Psoas muscle (tissue), 8 donors: ENCODE measurements at regions of chr10 and their contacts with region 1.

Region 1: DNA sequence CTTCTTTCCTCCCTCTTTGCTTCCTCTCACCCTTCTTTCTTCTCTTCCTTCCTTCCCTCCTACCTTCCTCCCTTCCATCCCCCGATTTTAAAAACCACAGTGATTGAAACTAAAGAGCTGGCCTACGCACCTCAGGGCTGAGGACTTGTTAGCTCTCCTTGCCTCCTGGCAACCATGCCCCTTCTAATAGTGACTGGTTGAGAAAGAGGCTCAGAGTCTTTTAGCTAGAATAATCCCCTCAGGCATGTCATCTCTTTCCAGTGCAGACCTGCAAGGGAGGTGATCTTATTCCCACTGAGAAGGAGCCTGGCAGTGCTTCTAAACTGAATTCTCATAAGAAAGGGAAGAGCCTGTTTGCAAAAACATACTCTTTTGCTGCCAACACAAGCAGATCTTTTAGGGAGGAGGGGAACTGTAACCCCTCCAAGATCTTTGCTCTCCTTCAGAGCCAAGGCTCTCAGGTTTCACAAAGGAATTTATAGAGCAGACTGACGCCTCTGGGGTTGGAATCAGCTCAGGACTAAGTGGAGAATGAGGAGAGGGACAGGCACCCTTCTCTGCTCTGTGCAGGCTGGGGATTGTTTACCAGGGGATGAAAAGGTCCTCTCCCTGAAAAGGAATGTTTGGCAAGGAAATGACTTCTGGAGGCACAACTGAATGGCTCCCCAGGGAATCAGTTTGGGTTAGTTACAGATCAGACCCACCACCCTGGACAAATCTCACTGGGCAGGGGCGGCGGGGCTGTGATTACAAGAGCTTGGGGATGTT is 9.4 kb upstream of the ANKRD1 start:
- DNase-seq: no peak
- ATAC-seq: peak; percentile 81 to 93 (median 86)
- H3K4me3 ChIP-seq: peak overlapping the region; percentile 3
- H3K27ac ChIP-seq: peak overlapping the region; percentile 81
- H3K4me1 ChIP-seq: peaks cover 26% of the 10 kb centered on the region
- H3K27me3 ChIP-seq: peaks cover 0 to 2% (median 0%) of the 10 kb centered on the region in 3 donors
- CTCF ChIP-seq: no peak

Region 2: GRCh38 chr10:90960355-90960814 is 30.1 kb after region 1 on chr10:
- intact Hi-C with region 1: loop called in 1 of 2 experiments (anchors 2 kb)
- DNase-seq: peak in 1 of 2 donors; percentile 59
- ATAC-seq: peak; percentile 91 to 95 (median 94)
- H3K4me3 ChIP-seq: no peak overlapping the region
- H3K27ac ChIP-seq: peak overlapping the region; percentile 88
- H3K4me1 ChIP-seq: peaks cover 29% of the 10 kb centered on the region
- H3K27me3 ChIP-seq: no peaks in the 10 kb centered on the region
- CTCF ChIP-seq: peak; percentile 16